ENCODE measurements at regions of chr22 and their contacts with region 1.

Region 1: DNA sequence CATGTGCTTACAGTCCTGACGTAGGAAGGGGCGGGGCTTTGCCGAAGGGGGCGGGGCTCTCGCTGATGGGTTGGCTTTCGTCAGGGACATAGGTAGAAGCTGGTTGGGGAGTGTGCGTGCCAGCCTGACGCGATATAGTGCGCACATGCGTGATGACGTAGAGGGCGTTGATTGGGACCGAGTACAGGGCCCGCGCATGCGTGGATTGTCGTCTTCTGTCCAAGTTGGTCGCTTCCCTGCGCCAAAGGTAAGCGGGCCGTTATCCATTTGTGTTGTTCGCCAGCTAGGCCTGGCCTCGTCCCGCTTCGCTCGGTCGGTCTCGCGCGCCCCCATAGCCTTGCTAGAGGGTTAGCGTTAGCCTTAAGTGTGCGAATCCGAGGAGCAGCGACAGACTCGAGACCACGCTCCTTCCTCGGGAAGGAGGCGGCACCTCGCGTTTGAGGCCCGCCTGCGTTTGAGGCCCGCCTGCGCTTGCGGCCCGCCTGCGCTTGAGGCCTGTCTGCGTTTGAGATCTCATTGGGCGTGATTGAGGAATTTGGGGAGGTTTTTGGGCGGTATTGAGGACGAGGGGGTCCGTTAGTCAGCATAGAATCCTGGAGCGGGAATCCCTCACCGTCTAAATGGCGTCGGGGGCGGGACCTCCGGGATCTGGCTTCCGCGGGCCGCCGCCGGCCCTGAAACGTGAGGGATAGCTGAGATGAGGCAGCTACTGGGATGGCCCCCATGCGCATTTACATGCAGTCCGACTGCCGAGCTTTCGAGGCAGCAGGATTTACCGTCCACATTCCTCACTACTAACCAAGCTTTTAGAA is at the start of gene XRCC6:
- DNase-seq: peak; percentile 99 to 100 (median 100)
- H3K4me3 ChIP-seq: peak within 1 kb of the TSS; percentile 93
- H3K4me3 Mint-ChIP-seq: peak within 1 kb of the TSS; percentile 91 to 100 (median 95)
- H3K27ac ChIP-seq: peak within 1 kb of the TSS; percentile 99
- H3K27ac Mint-ChIP-seq: peak within 1 kb of the TSS; percentile 98 to 100 (median 99)
- H3K4me1 ChIP-seq: peaks cover 30% of the 10 kb centered on the region
- H3K4me1 Mint-ChIP-seq: peaks cover 32 to 66% (median 44%) of the 10 kb centered on the region in 3 donors
- H3K27me3 ChIP-seq: no peaks in the 10 kb centered on the region
- H3K27me3 Mint-ChIP-seq: peaks cover 0 to 1% of the 10 kb centered on the region in 2 donors
- total RNA-seq, gene XRCC6: 447 to 453 TPM

Region 2: GRCh38 chr22:41589391-41590241 is 31.7 kb before region 1 on chr22 and contains the start of gene PMM1:
- CTCF ChIA-PET with region 1: interaction called, 4 read pairs
- POLR2A ChIA-PET with region 1: interaction called, 48 read pairs
- DNase-seq: peak; percentile 100
- H3K4me3 ChIP-seq: peak within 1 kb of the TSS; percentile 90
- H3K4me3 Mint-ChIP-seq: peak within 1 kb of the TSS; percentile 78 to 97 (median 93)
- H3K27ac ChIP-seq: peak within 1 kb of the TSS; percentile 72
- H3K27ac Mint-ChIP-seq: peak within 1 kb of the TSS; percentile 11 to 93 (median 87)
- H3K4me1 ChIP-seq: peaks cover 9% of the 10 kb centered on the region
- H3K4me1 Mint-ChIP-seq: peaks cover 13 to 30% (median 23%) of the 10 kb centered on the region in 3 donors
- H3K27me3 ChIP-seq: no peaks in the 10 kb centered on the region
- H3K27me3 Mint-ChIP-seq: no peaks in the 10 kb centered on the region
- total RNA-seq, gene PMM1: 27.5 to 33.2 TPM